Activated naive CD4-positive, alpha-beta T cell treated with anti-CD3 and anti-CD28 coated beads for 36 hours (primary cell): ENCODE measurements at regions of chr11 and their contacts with region 1.

Region 1: GRCh38 chr11:48172818-48173609 is 43.6 kb upstream of the OR4B1 start:
- DNase-seq: peak; percentile 81
- H3K4me3 Mint-ChIP-seq: no peak overlapping the region
- H3K27ac Mint-ChIP-seq: no peak overlapping the region
- H3K4me1 Mint-ChIP-seq: peaks cover 18% of the 10 kb centered on the region
- H3K27me3 Mint-ChIP-seq: no peaks in the 10 kb centered on the region

Region 2: GRCh38 chr11:47688111-47688510 is 484.9 kb before region 1 on chr11:
- CTCF ChIA-PET with region 1: no interaction called
- intact Hi-C with region 1: no loop called
- DNase-seq: no peak
- H3K4me3 Mint-ChIP-seq: no peak overlapping the region
- H3K27ac Mint-ChIP-seq: no peak overlapping the region
- H3K4me1 Mint-ChIP-seq: peaks cover 3% of the 10 kb centered on the region
- H3K27me3 Mint-ChIP-seq: no peaks in the 10 kb centered on the region

Region 3: GRCh38 chr11:47786373-47786772 is 386.6 kb before region 1 on chr11:
- CTCF ChIA-PET with region 1: no interaction called
- intact Hi-C with region 1: no loop called
- DNase-seq: no peak
- H3K4me3 Mint-ChIP-seq: no peak overlapping the region
- H3K27ac Mint-ChIP-seq: no peak overlapping the region
- H3K4me1 Mint-ChIP-seq: no peaks in the 10 kb centered on the region
- H3K27me3 Mint-ChIP-seq: no peaks in the 10 kb centered on the region

Region 4: GRCh38 chr11:48138222-48138621 is 34.8 kb before region 1 on chr11:
- CTCF ChIA-PET with region 1: no interaction called
- intact Hi-C with region 1: no loop called
- DNase-seq: no peak
- H3K4me3 Mint-ChIP-seq: no peak overlapping the region
- H3K27ac Mint-ChIP-seq: no peak overlapping the region
- H3K4me1 Mint-ChIP-seq: peaks cover 5% of the 10 kb centered on the region
- H3K27me3 Mint-ChIP-seq: no peaks in the 10 kb centered on the region

Region 5: DNA sequence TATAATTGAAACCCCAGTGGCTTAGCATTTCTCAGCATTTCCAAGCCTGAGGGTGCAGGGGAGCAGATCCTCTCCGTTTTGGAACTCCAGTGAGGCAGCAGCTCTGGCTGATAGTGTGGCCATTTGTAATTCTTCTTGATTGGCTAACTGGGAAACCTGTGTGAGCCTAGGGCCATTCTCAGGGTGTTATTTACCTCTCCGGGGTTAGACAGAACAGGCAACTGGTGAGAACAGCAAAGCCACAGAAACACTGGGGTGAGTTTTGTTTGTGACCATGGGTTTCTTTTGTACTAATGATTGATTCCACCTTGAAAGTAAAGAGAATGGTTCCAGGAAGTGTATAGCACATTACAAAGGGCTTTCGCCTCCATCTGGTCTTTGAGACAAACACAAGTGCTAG is 69.5 kb after region 1 on chr11:
- CTCF ChIA-PET with region 1: no interaction called
- intact Hi-C with region 1: no loop called
- DNase-seq: no peak
- H3K4me3 Mint-ChIP-seq: no peak overlapping the region
- H3K27ac Mint-ChIP-seq: no peak overlapping the region
- H3K4me1 Mint-ChIP-seq: no peaks in the 10 kb centered on the region
- H3K27me3 Mint-ChIP-seq: peaks cover 13% of the 10 kb centered on the region

Region 6: DNA sequence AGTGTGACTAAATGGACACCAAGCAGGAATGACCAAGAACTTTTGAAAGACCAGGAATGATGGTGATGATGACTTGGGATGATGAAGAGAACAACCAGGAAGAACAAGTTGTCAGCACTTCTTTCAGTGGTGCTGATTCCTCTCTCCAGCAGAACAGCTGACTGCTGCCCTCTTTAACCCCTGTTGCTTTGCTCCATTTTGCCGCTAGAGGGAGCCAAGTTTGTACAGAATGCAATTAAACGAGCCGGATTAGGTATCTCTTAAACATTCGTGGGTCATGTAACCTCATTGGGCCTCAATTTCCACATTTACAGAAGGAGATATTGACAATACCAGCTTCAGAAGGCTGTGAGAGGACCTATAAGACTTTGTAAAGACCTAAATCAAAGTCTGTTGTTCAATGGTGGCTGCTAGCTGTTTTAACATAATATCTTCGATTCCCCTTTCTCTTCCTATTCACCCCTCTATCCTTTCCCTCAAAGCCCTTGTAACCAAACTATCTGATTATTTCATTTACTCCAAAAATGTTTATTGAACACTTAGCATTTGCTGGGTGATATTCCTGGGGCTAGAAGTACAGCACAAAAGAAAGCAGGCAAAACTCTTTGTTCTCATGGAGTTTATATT is 134.9 kb after region 1 on chr11:
- CTCF ChIA-PET with region 1: interaction called, 13 read pairs
- intact Hi-C with region 1: loop called (anchors 2 kb)
- DNase-seq: peak; percentile 87
- H3K4me3 Mint-ChIP-seq: no peak overlapping the region
- H3K27ac Mint-ChIP-seq: no peak overlapping the region
- H3K4me1 Mint-ChIP-seq: no peaks in the 10 kb centered on the region
- H3K27me3 Mint-ChIP-seq: peaks cover 10% of the 10 kb centered on the region

Region 7: GRCh38 chr11:49533204-49533603 is 1360.2 kb after region 1 on chr11:
- CTCF ChIA-PET with region 1: no interaction called
- intact Hi-C with region 1: loop called (anchors 5 kb)
- DNase-seq: no peak
- H3K4me3 Mint-ChIP-seq: no peak overlapping the region
- H3K27ac Mint-ChIP-seq: no peak overlapping the region
- H3K4me1 Mint-ChIP-seq: no peaks in the 10 kb centered on the region
- H3K27me3 Mint-ChIP-seq: no peaks in the 10 kb centered on the region